ENCODE measurements at regions of chr16 and their contacts with region 1.

Region 1: DNA sequence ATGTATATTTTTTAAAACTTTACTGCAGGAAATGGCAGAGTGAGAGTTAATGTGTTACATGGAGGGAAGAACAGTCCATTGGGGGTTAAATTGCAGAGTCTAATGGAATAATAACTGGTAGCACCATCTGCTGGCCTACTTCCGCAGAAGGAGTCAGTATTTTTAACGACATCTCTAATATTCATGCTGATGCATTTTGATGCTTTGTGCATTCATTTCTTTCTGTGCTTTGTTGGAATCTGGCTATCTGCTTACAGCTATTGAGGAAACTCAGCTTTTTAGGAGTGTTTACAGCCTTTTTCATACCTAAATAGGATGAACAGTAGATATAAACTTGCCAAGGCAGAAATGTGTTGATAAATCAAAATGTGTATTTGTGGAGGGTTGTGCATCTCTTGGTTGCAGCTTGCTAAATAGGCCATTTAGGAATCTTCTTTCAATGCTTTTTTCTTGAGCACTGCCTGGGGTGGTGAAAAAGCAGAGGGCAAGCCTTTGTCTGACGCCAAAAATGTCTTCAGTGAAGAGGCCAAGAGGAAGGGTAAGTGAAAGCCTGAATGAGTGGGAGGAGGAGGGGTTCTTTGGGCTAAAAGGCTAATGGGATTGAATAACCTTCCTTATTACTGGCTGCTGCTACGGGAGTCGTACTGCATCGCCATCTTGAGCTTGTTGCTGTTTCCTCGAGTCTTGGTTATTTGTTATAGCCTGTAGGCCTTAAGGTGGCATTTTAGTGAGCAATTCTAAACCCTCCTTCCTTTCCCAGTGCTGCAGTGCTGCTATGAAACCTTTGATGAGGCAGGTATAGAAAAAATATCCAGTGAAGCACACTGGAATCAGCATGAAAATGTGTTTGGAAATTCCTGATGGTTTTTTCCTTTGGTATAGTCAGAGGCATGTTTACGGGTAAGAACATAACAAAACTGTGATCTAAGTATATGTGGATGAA is 153.3 kb downstream of the CHD9 start:
- H3K4me3 ChIP-seq: peak overlapping the region; percentile 55
- H3K27ac ChIP-seq: peak overlapping the region; percentile 76
- H3K4me1 ChIP-seq: peaks cover 5% of the 10 kb centered on the region
- CTCF ChIP-seq: peak; percentile 55

Region 2: DNA sequence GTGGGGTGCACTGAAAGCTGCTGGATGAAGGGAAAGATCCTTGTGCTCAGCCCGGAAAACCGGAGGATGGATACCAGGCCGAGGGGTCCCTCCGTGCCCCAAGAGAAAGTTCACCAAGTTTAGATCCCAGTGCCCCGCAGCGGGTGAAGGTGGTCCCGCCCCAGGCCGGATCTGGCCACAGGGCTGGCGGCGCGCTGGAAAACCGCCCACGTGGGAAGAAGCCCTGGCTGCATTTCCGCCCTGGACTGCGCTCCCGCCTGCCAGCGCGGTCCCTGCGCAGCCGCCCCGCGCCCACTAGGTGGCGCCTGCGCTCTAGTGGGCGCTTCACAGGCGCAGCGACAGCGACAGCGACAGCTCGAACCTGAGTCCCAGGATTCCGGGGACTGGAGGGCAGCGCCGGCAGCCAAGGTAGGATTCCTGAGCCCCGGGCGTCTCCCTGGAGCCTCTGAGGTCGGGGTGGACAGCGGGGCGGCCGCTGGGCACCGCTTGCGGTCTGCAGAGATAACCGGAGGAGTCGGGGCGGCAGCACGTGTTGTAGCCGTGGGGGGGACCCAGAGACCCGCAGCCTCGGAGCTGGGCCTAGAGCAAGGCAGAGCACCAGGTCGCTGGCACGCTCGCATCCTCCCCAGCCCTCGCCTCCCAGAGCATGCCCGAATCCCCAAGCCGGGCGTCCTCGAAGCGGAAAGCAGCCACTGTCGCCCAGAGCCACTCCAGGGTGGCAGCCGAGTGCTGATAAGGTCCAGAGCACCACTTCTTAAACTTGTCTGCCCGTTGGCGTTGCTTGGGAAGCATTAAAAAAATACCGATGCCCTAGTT is 153.2 kb before region 1 on chr16 and contains the start of gene CHD9:
- CTCF ChIA-PET with region 1: interaction called, 12 read pairs
- POLR2A ChIA-PET with region 1: interaction called, 4 read pairs
- H3K4me3 ChIP-seq: peak within 1 kb of the TSS; percentile 65
- H3K27ac ChIP-seq: peak within 1 kb of the TSS; percentile 73; the same call in 1 of the 2 replicates
- H3K4me1 ChIP-seq: no peaks in the 10 kb centered on the region
- CTCF ChIP-seq: peak; percentile 99

Region 3: GRCh38 chr16:53232826-53233529 is 24.9 kb after region 1 on chr16:
- CTCF ChIA-PET with region 1: interaction called, 11 read pairs
- POLR2A ChIA-PET with region 1: no interaction called
- H3K4me3 ChIP-seq: no peak overlapping the region
- H3K27ac ChIP-seq: no peak overlapping the region
- H3K4me1 ChIP-seq: no peaks in the 10 kb centered on the region
- CTCF ChIP-seq: no peak